A673 (cell line): ENCODE measurements at regions of chr6 and their contacts with region 1.

Region 1: GRCh38 chr6:10847684-10848083 is 9.3 kb upstream of the MAK start:
- DNase-seq: peak; percentile 11
- H3K4me3 ChIP-seq: no peak overlapping the region
- H3K27ac ChIP-seq: no peak overlapping the region
- H3K4me1 ChIP-seq: no peaks in the 10 kb centered on the region
- H3K27me3 ChIP-seq: no peaks in the 10 kb centered on the region
- CTCF ChIP-seq: peak; percentile 57

Region 2: GRCh38 chr6:11064836-11065235 is 217.2 kb after region 1 on chr6:
- CTCF ChIA-PET with region 1: interaction called, 12 read pairs
- POLR2A ChIA-PET with region 1: no interaction called
- intact Hi-C with region 1: no loop called
- DNase-seq: peak; percentile 45
- H3K4me3 ChIP-seq: no peak overlapping the region
- H3K27ac ChIP-seq: no peak overlapping the region
- H3K4me1 ChIP-seq: no peaks in the 10 kb centered on the region
- H3K27me3 ChIP-seq: no peaks in the 10 kb centered on the region
- CTCF ChIP-seq: no peak